Activated naive CD4-positive, alpha-beta T cell treated with anti-CD3 and anti-CD28 coated beads, Interleukin-2, amount 10 ng/mL, durations not matched to agents 7 days and 5 days (primary cell): ENCODE measurements at regions of chr19 and their contacts with region 1.

Region 1: GRCh38 chr19:33176670-33177416 is 17.3 kb upstream of the LRP3 start:
- DNase-seq: peak; percentile 96
- H3K4me3 Mint-ChIP-seq: peak overlapping the region; percentile 86
- H3K27ac Mint-ChIP-seq: peak overlapping the region; percentile 97
- H3K4me1 Mint-ChIP-seq: peaks cover 37% of the 10 kb centered on the region
- H3K27me3 Mint-ChIP-seq: peaks cover 18% of the 10 kb centered on the region

Region 2: DNA sequence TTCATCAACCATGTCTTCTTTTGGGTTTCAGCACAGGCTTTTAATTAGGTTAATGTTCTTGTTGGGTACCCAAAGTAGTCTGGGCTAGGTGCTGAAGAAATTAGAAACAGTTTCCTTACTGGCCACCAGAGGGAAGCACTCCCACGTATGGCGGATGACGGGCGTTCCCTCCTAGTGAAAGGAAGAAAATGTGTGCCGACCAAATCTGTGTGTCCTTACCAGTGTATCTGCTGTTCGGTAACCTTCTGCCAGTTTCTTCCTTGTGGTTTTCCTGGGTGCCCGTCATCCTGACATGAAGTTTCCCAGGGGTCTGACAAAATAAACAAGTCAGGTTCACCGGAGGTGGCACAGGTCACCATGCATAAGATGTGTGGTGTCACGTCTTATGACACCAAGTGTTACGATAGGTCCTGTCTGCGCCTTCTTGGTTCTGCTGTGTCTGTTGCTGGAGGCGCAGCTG is 50.9 kb before region 1 on chr19:
- CTCF ChIA-PET with region 1: interaction called, 12 read pairs
- DNase-seq: peak; percentile 69
- H3K4me3 Mint-ChIP-seq: no peak overlapping the region
- H3K27ac Mint-ChIP-seq: no peak overlapping the region
- H3K4me1 Mint-ChIP-seq: peaks cover 5% of the 10 kb centered on the region
- H3K27me3 Mint-ChIP-seq: no peaks in the 10 kb centered on the region

Region 3: DNA sequence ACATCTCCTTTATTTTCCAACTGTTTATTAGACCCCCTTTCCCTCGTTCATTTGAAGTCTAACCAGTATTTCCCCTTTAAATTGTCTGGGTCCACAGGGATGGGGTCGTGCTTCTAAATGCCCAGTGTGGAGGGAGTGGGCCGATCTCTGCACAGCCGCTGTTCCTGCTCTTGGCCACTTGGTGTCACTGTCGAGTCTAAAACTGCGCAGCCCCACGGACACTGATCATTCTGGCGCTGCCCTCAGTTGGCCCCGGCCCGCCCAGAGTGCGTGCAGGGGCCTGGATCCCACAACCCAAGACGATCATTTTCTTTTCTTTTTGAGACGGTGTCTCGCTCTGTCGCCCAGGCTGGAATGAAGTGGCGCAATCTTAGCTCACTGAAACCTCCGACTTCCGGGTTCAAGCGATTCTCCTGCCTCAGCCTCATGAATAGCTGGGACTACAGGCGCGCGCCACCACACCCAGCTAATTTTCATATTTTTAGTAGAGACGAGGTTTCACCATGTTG is 32.9 kb before region 1 on chr19:
- CTCF ChIA-PET with region 1: interaction called, 10 read pairs
- DNase-seq: peak; percentile 69
- H3K4me3 Mint-ChIP-seq: no peak overlapping the region
- H3K27ac Mint-ChIP-seq: no peak overlapping the region
- H3K4me1 Mint-ChIP-seq: peaks cover 4% of the 10 kb centered on the region
- H3K27me3 Mint-ChIP-seq: peaks cover 21% of the 10 kb centered on the region

Region 4: GRCh38 chr19:33157906-33158305 is 18.9 kb before region 1 on chr19:
- CTCF ChIA-PET with region 1: interaction called, 14 read pairs
- DNase-seq: no peak
- H3K4me3 Mint-ChIP-seq: no peak overlapping the region
- H3K27ac Mint-ChIP-seq: peak overlapping the region; percentile 72
- H3K4me1 Mint-ChIP-seq: peaks cover 43% of the 10 kb centered on the region
- H3K27me3 Mint-ChIP-seq: no peaks in the 10 kb centered on the region

Region 5: GRCh38 chr19:33259539-33259938 is 82.7 kb after region 1 on chr19:
- CTCF ChIA-PET with region 1: no interaction called
- DNase-seq: no peak
- H3K4me3 Mint-ChIP-seq: no peak overlapping the region
- H3K27ac Mint-ChIP-seq: no peak overlapping the region
- H3K4me1 Mint-ChIP-seq: peaks cover 15% of the 10 kb centered on the region
- H3K27me3 Mint-ChIP-seq: peaks cover 48% of the 10 kb centered on the region